Heart right ventricle (tissue), 16 donors: ENCODE measurements at regions of chr18 and their contacts with region 1.

Region 1: DNA sequence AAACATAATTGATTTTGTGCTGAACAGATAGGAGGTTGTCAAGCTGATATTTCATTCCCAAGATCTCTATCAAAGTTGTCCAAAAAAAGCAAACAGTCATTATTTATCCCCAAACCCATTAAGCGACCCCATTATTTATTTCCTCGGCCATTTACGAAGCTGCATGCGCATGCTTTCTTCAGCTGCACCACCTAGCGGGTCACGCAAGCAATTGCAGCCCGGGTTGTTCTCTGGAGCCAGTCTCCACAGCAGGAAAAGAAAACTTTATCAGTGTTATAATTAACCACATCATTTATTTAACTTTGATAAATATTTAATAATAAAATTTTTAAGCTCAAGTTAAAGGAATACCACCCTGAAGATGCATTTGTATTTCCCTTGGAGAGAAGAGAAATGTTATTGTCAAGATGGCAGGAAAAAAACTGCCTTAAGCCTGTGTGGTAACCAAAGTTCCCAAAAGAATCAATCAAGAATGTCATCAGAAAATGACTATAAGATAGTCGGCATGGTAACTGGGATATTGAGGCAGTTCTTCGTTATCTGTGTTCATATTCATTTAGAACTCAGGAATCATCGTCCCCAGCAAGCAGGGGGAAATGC is 304.7 kb downstream of the FBXO15 start:
- DNase-seq: peak; percentile 36 to 38
- ATAC-seq: peak in 1 of 8 donors; percentile 48
- H3K4me3 ChIP-seq: peak overlapping the region in 3 of 10 donors; percentile 9 to 34 (median 16)
- H3K27ac ChIP-seq: no peak overlapping the region
- H3K4me1 ChIP-seq: peaks cover 0 to 11% (median 0%) of the 10 kb centered on the region in 9 donors
- H3K27me3 ChIP-seq: peaks cover 0 to 18% (median 11%) of the 10 kb centered on the region in 7 donors
- CTCF ChIP-seq: peak; percentile 80 to 97 (median 95)

Region 2: GRCh38 chr18:72762515-72763122 is 1080.3 kb before region 1 on chr18:
- intact Hi-C with region 1: loop called in 8 of 10 experiments (anchors 2 to 10 kb)
- DNase-seq: peak in 1 of 2 donors; percentile 17
- ATAC-seq: no peak
- H3K4me3 ChIP-seq: no peak overlapping the region
- H3K27ac ChIP-seq: no peak overlapping the region
- H3K4me1 ChIP-seq: no peaks in the 10 kb centered on the region
- H3K27me3 ChIP-seq: no peaks in the 10 kb centered on the region
- CTCF ChIP-seq: peak; percentile 47 to 85 (median 78)

Region 3: GRCh38 chr18:73147591-73147990 is 695.3 kb before region 1 on chr18:
- intact Hi-C with region 1: loop called in 1 of 10 experiments (anchors 10 kb)
- DNase-seq: no peak
- ATAC-seq: no peak
- H3K4me3 ChIP-seq: no peak overlapping the region
- H3K27ac ChIP-seq: no peak overlapping the region
- H3K4me1 ChIP-seq: no peaks in the 10 kb centered on the region
- H3K27me3 ChIP-seq: no peaks in the 10 kb centered on the region
- CTCF ChIP-seq: no peak

Region 4: DNA sequence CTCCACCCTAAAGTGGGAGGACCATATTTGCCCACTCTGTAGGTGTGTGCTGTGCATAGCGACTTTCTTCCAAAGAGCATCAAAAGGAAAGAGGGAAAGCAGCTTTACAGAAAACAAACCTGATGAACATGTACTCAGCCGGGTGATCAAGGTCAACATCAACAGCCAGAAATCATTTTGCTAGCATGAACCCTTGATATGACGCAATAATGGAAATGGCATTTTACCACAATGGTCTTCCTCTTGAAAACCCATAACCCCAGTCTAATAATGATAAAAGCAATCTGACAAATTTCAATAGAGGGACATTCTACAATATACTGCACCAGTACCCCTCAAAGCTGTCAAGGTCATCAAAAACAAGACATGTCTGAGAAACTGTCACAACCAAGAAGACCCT is 45.5 kb before region 1 on chr18:
- intact Hi-C with region 1: no loop called
- DNase-seq: no peak
- ATAC-seq: no peak
- H3K4me3 ChIP-seq: no peak overlapping the region
- H3K27ac ChIP-seq: no peak overlapping the region
- H3K4me1 ChIP-seq: no peaks in the 10 kb centered on the region
- H3K27me3 ChIP-seq: peaks cover 0 to 2% (median 0%) of the 10 kb centered on the region in 7 donors
- CTCF ChIP-seq: no peak